Caco-2 (cell line): ENCODE measurements at regions of chr3 and their contacts with region 1.

Region 1: DNA sequence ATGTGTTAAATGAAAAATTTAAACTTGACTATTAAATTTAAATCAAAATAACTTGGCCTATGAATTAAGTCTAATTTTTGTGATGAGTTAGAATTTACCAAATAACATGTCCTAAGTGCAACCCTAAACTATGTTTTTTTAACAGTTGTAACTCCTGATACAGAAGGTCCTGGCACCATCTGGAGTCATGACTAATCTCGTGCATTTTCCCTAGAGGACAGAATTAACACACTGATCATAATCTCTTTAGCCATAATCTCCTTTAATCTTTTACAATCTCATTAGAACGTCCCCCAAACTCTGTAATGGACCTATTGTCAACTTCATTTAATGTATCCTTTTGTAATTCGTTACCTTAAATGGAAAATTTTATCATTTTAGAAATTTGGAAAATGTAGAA is 100.6 kb downstream of the SUCNR1 start:
- DNase-seq: no peak
- H3K4me3 ChIP-seq: no peak overlapping the region
- H3K4me3 Mint-ChIP-seq: no peak overlapping the region
- H3K27ac Mint-ChIP-seq: no peak overlapping the region
- H3K4me1 ChIP-seq: peaks cover 62% of the 10 kb centered on the region
- H3K4me1 Mint-ChIP-seq: peaks cover 34% of the 10 kb centered on the region
- H3K27me3 ChIP-seq: no peaks in the 10 kb centered on the region
- H3K27me3 Mint-ChIP-seq: no peaks in the 10 kb centered on the region
- CTCF ChIP-seq: no peak

Region 2: DNA sequence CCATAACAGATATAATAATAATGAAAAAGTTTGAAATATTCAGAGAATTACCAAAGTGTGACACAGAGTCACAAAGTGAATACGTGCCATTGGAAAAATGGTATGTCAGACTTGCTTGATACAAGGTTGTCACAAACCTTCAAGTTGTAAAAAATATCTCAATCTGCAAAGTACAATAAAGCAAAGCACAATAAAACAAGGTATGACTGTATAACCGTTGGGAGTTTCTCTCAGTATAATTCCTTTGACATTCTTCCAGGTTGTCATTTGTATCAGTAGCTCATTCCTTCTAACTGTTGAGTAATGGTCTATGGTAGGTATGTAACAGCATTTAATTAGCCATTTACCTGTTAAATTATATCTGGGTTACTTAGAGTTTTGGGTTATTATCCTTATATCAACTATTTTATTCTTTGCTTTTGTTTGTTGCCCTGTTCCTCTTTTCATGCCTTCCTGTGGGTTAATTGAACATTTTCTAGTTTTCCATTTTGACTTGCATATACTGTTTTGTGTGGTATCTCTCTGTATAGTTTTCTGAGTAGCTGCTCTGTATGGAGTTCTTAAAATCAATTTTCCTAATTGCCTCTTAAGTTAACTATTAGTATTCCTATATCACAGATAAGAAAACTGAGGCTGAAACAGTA is 11.8 kb after region 1 on chr3:
- CTCF ChIA-PET with region 1: interaction called, 4 read pairs
- POLR2A ChIA-PET with region 1: no interaction called
- intact Hi-C with region 1: loop called (anchors 1 kb)
- DNase-seq: no peak
- H3K4me3 ChIP-seq: no peak overlapping the region
- H3K4me3 Mint-ChIP-seq: no peak overlapping the region
- H3K27ac Mint-ChIP-seq: peak overlapping the region; percentile 68
- H3K4me1 ChIP-seq: peaks cover 21% of the 10 kb centered on the region
- H3K4me1 Mint-ChIP-seq: peaks cover 19% of the 10 kb centered on the region
- H3K27me3 ChIP-seq: no peaks in the 10 kb centered on the region
- H3K27me3 Mint-ChIP-seq: no peaks in the 10 kb centered on the region
- CTCF ChIP-seq: no peak

Region 3: DNA sequence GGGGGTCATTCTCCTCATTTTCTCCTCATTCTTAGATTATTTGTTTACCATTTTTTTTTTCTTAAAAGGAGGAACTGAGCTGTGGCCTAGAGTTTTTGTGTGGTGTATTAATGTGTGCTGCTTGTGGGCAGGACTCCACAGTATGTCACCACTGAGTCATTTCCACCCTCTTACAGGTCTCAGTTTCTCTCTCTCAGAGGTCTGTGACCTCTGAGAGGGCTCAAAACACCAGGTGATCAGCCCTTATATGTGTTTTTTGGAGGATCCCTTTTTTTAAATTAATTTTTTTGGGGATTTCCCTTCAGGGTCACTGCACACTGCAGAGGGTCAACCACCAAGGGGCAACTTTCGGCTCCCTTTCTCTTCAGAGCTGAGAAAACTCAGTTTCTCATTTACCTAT is 65.8 kb after region 1 on chr3:
- CTCF ChIA-PET with region 1: interaction called, 4 read pairs
- POLR2A ChIA-PET with region 1: no interaction called
- intact Hi-C with region 1: loop called (anchors 5 kb)
- DNase-seq: no peak
- H3K4me3 ChIP-seq: no peak overlapping the region
- H3K4me3 Mint-ChIP-seq: no peak overlapping the region
- H3K27ac Mint-ChIP-seq: no peak overlapping the region
- H3K4me1 ChIP-seq: peaks cover 7% of the 10 kb centered on the region; the same call in 1 of the 2 replicates
- H3K4me1 Mint-ChIP-seq: no peaks in the 10 kb centered on the region
- H3K27me3 ChIP-seq: no peaks in the 10 kb centered on the region
- H3K27me3 Mint-ChIP-seq: no peaks in the 10 kb centered on the region
- CTCF ChIP-seq: no peak

Region 4: GRCh38 chr3:152051501-152052404 is 77.7 kb after region 1 on chr3:
- CTCF ChIA-PET with region 1: no interaction called
- POLR2A ChIA-PET with region 1: no interaction called
- intact Hi-C with region 1: loop called (anchors 1 kb)
- DNase-seq: peak; percentile 53 to 63
- H3K4me3 ChIP-seq: no peak overlapping the region
- H3K4me3 Mint-ChIP-seq: peak overlapping the region; percentile 52
- H3K27ac Mint-ChIP-seq: peak overlapping the region; percentile 89
- H3K4me1 ChIP-seq: peaks cover 50% of the 10 kb centered on the region
- H3K4me1 Mint-ChIP-seq: peaks cover 34% of the 10 kb centered on the region
- H3K27me3 ChIP-seq: no peaks in the 10 kb centered on the region
- H3K27me3 Mint-ChIP-seq: no peaks in the 10 kb centered on the region
- CTCF ChIP-seq: no peak

Region 5: DNA sequence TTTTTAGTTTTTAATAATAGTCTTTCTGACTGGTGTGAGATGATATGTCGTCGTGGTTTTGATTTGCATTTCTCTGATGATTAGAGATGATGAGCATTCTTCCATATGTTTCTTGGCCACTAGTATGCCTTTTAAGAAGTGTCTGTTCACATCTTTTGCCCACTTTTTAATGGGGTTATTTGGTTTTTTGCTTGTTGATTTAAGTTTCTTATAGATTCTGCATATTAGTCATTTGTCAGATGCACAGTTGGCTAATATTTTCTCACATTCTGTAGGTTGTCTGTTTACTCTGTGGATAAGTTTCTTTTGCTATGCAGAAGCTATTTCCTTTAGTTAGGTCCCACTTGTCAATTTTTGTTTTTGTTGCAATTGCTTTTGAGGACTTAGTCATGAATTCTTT is 84.8 kb after region 1 on chr3:
- CTCF ChIA-PET with region 1: no interaction called
- POLR2A ChIA-PET with region 1: no interaction called
- intact Hi-C with region 1: loop called (anchors 1 kb)
- DNase-seq: no peak
- H3K4me3 ChIP-seq: no peak overlapping the region
- H3K4me3 Mint-ChIP-seq: no peak overlapping the region
- H3K27ac Mint-ChIP-seq: peak overlapping the region; percentile 23
- H3K4me1 ChIP-seq: peaks cover 25% of the 10 kb centered on the region
- H3K4me1 Mint-ChIP-seq: peaks cover 25% of the 10 kb centered on the region
- H3K27me3 ChIP-seq: no peaks in the 10 kb centered on the region
- H3K27me3 Mint-ChIP-seq: no peaks in the 10 kb centered on the region
- CTCF ChIP-seq: no peak